PC-3 (cell line): ENCODE measurements at regions of chr2 and their contacts with region 1.

Region 1: GRCh38 chr2:29053670-29054400 is 20.5 kb downstream of the PCARE start:
- DNase-seq: peak; percentile 43
- ATAC-seq: peak; percentile 85
- H3K4me3 ChIP-seq: no peak overlapping the region
- H3K27ac ChIP-seq: no peak overlapping the region
- H3K4me1 ChIP-seq: peaks cover 12% of the 10 kb centered on the region
- H3K27me3 ChIP-seq: no peaks in the 10 kb centered on the region
- CTCF ChIP-seq: peak; percentile 61

Region 2: DNA sequence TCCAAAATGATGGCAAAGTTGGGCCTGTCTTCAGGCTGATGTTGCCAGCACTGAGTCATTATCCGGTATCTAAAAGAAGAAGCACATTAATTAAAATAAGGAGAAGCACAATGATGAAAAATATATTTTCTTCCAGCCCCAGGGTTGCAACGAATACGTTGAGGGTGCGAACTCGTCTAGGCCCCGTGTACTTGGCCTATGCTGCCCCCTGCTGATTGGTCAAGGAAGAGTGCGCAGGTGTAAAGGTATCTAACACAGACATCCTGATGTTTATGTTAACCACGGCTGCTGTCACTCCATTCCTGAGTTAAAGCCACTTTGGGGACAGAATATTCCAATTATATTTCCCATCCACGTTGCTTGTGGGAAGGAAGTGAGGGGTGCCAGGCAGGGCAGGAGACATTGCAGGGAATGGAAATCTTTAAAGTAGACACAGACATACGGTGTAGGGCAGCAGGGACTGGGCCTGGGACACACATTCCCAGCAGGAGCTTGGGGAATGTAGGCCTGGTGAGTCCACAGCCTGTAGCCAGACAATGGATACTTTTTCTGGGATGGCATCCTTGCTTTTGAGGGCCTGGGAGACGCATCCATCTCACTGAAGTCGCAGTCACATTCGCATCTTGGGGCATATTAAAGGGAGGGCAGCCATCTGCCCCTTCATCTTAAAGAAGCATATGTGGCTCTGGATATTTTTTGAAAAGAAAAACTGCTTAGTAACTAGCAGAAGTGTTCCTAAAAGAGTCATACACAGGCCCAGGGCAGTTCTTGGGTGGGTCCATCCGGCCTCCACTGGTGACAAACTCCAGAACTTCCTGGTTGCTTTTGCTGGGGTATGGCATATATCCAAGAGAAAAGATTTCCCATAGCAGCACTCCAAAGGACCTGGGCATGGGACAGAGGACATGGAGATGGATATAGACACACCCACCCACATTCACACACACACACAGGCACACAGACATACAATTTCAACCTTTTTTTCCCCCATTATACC is 143.3 kb after region 1 on chr2:
- CTCF ChIA-PET with region 1: no interaction called
- POLR2A ChIA-PET with region 1: no interaction called
- intact Hi-C with region 1: loop called (anchors 1 kb)
- DNase-seq: peak; percentile 86
- ATAC-seq: peak; percentile 96
- H3K4me3 ChIP-seq: no peak overlapping the region
- H3K27ac ChIP-seq: no peak overlapping the region
- H3K4me1 ChIP-seq: peaks cover 8% of the 10 kb centered on the region; the same call in 1 of the 2 replicates
- H3K27me3 ChIP-seq: no peaks in the 10 kb centered on the region
- CTCF ChIP-seq: peak; percentile 96